ENCODE measurements at regions of chr6 and their contacts with region 1.

Region 1: DNA sequence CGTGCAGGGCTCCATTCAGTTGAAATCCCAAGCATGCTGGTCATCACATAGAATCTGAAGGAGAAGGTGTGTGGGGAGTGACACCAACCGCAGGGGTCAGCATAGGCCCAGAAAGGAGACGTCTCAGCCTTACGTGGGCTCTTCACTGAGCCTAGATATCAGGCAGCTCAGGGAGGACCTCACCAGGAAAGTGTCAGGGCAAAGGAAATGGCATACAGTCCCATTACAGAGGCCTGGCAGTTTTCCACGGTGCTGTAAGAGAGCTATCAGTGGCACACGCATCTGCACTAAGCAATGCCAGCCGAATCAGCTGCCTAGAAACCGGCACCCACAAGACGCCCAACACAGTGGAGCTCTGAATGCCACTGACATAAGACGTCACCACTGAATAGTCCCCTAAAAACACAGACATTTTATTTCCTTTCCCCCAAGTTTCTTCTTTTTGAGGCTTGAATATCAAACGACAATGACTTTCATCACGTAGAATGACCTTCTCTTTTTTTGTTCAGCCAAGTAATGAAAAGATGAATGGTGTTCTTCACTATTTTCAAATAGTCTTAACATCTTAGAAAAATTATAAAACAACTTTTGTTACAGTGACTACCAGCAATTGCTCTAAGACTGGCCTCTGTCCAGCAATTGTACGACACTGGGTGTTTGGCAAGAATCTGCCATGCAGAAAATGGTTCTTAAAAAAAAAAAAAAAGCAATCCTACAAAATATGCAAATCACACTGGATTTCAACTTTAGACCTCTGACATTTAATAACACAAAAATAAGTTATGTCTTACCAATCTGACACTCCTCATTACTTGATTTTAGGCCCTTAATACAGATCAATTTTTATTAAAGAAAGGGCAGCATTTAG is 88.9 kb upstream of the FOXQ1 start:
- DNase-seq: no peak
- H3K4me3 ChIP-seq: no peak overlapping the region
- H3K4me3 Mint-ChIP-seq: no peak overlapping the region
- H3K27ac Mint-ChIP-seq: no peak overlapping the region
- H3K4me1 ChIP-seq: peaks cover 19% of the 10 kb centered on the region
- H3K4me1 Mint-ChIP-seq: peaks cover 35% of the 10 kb centered on the region
- H3K27me3 ChIP-seq: no peaks in the 10 kb centered on the region
- H3K27me3 Mint-ChIP-seq: no peaks in the 10 kb centered on the region
- CTCF ChIP-seq: peak in 1 of 2 experiments; percentile 15

Region 2: DNA sequence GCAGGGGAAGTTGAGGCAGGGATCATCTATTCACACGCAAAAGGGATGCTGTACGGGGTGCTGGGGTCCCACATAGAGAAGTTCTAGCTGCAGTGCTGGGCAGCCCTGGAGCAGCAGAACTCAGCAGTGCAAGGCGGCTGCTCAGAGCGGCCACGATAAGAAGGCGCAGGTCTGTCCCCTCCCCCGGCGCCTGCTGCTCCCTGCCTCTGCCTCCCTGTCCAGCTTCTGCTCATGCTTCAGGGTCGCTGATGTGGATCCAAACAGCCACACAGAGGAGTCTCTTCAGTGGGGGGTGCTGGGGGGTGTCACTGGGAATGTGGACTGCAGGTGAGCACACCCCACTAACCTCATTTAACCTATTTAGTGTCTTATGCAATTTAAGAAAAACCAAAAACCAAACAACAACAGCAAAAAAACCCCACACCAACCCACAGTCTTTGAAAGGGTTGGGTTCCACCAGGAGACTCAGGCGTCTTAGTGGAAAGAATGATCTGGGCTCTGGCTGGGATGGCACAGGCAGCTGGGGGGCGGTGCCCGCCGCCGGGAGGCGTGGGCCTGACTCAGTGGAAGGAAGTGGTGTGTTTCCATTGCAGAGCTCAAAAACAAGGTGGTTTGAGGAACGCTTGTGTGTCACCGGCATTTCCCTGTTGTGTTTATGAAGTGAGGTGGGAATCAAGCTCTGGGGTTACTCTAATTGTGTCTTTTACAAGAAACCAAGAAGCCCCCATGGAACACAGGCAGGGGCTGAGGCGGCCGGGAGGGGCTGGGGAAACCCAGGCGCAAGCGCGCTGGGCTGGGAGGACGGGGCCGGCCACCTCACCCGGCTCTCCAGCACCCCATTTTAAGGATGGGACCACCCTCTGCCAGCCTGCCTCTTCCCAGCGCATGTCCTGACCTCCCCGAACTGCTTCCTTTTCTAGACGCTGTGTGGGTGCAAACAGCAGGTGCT is 776.3 kb before region 1 on chr6:
- CTCF ChIA-PET with region 1: no interaction called
- POLR2A ChIA-PET with region 1: no interaction called
- intact Hi-C with region 1: no loop called
- DNase-seq: no peak
- H3K4me3 ChIP-seq: no peak overlapping the region
- H3K4me3 Mint-ChIP-seq: no peak overlapping the region
- H3K27ac Mint-ChIP-seq: no peak overlapping the region
- H3K4me1 ChIP-seq: no peaks in the 10 kb centered on the region
- H3K4me1 Mint-ChIP-seq: no peaks in the 10 kb centered on the region
- H3K27me3 ChIP-seq: no peaks in the 10 kb centered on the region
- H3K27me3 Mint-ChIP-seq: peaks cover 17% of the 10 kb centered on the region
- CTCF ChIP-seq: no peak

Region 3: GRCh38 chr6:1110164-1110563 is 112.8 kb before region 1 on chr6:
- CTCF ChIA-PET with region 1: no interaction called
- POLR2A ChIA-PET with region 1: no interaction called
- intact Hi-C with region 1: loop called (anchors 10 kb)
- DNase-seq: peak; percentile 25 to 46
- H3K4me3 ChIP-seq: no peak overlapping the region
- H3K4me3 Mint-ChIP-seq: no peak overlapping the region
- H3K27ac Mint-ChIP-seq: peak overlapping the region; percentile 25
- H3K4me1 ChIP-seq: peaks cover 27% of the 10 kb centered on the region
- H3K4me1 Mint-ChIP-seq: peaks cover 24% of the 10 kb centered on the region
- H3K27me3 ChIP-seq: no peaks in the 10 kb centered on the region
- H3K27me3 Mint-ChIP-seq: no peaks in the 10 kb centered on the region
- CTCF ChIP-seq: no peak